MCF 10A (cell line): ENCODE measurements at regions of chr2 and their contacts with region 1.

Region 1: DNA sequence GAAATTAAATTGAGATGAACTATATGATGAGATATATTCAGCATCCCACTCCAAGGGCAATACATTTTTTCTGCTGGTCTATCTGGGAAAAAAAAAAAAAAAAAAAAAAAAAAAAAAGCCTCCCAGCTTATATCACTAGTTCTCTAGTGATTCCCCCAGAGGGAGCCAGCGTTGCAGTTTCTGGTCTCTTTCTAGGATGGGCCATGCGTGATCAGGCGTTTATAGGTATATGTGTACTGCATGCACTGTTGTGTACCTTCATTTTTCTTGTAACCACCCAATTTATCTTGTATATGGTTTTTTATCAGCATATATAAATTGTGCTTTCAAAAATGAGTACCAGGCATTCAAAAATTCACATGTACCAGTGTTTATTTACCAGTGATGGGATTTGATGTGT is 35.1 kb downstream of the DCDC2C start:
- DNase-seq: peak; percentile 74
- H3K4me3 Mint-ChIP-seq: no peak overlapping the region
- H3K27ac Mint-ChIP-seq: no peak overlapping the region
- H3K4me1 Mint-ChIP-seq: no peaks in the 10 kb centered on the region
- H3K27me3 Mint-ChIP-seq: peaks cover 16% of the 10 kb centered on the region
- CTCF ChIP-seq: peak; percentile 60

Region 2: DNA sequence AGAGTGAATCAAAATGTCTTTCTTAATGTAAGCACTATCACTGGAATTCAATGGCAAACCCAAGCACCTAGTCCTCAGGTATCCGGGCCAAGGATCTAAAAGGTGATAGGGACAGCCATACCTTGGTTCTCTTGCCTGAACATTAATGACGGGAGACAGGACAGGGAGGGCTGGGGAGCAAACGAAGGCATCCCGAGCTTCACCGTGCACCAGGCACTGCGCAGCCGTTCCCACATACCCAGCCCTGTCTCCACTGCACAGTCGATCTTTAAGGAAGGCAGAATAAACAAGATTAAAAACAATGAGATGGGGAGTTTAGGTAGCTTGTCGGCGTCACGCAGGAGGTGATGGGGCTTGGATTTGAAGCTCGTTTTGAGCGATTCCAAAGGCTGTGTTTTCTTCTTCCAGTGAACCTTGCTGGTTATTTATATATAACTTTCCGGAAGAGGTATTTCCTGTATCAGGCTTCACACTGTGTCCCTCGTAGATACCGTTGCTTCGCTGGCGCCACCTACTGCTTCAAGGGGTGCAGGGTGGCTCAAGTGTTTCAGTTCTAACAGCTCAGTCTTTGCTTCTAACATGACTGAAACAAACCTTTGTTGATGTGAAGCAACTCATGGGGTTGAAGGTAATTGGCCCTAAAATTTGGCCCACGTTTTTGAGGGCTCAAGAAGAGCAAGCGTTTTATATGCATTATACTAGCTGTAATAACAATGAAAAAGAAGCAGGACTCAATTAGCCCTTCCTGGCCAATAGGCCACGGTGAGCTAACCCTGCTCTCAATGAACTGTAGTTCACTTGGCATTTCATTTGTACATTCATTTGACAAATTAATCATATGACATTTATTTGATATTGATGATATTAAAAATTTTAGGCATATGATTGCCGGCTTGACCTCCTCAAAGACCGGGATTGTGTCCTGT is 42.3 kb after region 1 on chr2:
- CTCF ChIA-PET with region 1: interaction called, 5 read pairs
- POLR2A ChIA-PET with region 1: no interaction called
- intact Hi-C with region 1: loop called (anchors 1 kb)
- DNase-seq: peak; percentile 78
- H3K4me3 Mint-ChIP-seq: no peak overlapping the region
- H3K27ac Mint-ChIP-seq: no peak overlapping the region
- H3K4me1 Mint-ChIP-seq: peaks cover 18% of the 10 kb centered on the region
- H3K27me3 Mint-ChIP-seq: peaks cover 31% of the 10 kb centered on the region
- CTCF ChIP-seq: peak; percentile 42

Region 3: GRCh38 chr2:3805201-3805939 is 66.9 kb after region 1 on chr2:
- CTCF ChIA-PET with region 1: interaction called, 3 read pairs
- POLR2A ChIA-PET with region 1: no interaction called
- intact Hi-C with region 1: loop called (anchors 1 kb)
- DNase-seq: peak; percentile 73
- H3K4me3 Mint-ChIP-seq: no peak overlapping the region
- H3K27ac Mint-ChIP-seq: no peak overlapping the region
- H3K4me1 Mint-ChIP-seq: peaks cover 15% of the 10 kb centered on the region
- H3K27me3 Mint-ChIP-seq: no peaks in the 10 kb centered on the region
- CTCF ChIP-seq: peak; percentile 20

Region 4: DNA sequence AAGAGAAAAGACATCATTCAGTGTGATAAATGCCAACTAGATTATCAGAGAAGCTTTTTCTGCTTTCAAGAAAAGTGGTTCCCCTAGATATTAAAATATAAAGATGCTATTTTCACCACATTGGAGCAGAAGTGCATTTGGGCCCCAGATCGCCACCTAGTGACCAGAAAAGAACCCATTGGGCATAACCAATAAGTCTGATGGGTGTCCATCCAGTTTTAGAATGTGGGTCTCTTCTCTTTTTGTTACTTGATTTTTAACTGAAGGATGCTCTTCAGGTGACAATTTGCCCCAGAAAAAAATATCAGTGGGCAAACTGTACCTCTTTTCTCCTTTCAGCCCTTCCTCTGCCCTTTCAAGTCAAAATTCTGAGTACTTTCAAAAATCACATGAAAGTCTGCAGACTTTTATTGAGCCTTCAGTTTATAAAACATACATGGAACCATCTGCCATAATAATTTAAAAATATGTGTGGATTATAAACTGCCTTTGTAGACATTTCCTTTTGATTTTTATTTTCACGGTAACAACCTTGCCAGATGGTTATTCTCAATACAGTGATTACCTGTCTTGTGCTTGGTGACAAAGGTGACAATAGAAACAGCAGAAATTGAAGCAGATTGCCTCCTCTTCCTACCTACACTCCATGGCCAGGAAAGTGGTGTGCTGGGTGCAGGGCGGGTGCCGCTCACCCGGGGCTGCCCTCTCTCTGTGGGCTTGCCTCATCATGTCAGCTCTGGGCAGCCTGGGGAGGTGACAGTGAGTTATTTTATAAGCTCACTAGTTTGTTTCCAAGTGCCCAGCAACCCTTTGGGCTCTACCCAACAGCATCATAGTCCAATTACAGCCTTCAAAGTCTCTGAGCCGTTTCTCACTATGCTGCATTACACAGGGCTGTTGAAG is 89.5 kb after region 1 on chr2:
- CTCF ChIA-PET with region 1: interaction called, 15 read pairs
- POLR2A ChIA-PET with region 1: interaction called, 3 read pairs
- intact Hi-C with region 1: loop called (anchors 1 kb)
- DNase-seq: peak; percentile 70
- H3K4me3 Mint-ChIP-seq: no peak overlapping the region
- H3K27ac Mint-ChIP-seq: no peak overlapping the region
- H3K4me1 Mint-ChIP-seq: peaks cover 23% of the 10 kb centered on the region
- H3K27me3 Mint-ChIP-seq: no peaks in the 10 kb centered on the region
- CTCF ChIP-seq: peak; percentile 55

Region 5: DNA sequence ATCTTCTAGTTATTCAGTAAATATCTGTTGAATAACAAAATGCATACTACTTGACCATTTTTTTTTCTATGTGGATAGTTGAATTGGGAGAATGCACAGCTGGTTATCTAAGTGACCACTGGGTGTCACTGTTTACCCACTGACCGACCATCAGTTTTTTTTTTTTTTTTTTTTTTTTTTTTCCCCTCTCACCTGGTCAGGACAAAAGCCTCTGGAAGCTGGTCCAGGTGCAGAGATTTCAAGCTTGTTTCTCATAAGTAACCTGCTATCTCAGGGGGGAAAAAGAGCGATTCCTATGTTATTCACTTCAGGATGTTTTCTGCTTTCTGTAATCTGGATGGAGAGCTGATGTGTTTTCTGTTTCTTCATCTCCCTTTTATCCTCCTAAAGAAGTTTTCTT is 220.9 kb after region 1 on chr2:
- CTCF ChIA-PET with region 1: no interaction called
- POLR2A ChIA-PET with region 1: no interaction called
- intact Hi-C with region 1: loop called (anchors 5 kb)
- DNase-seq: peak; percentile 46
- H3K4me3 Mint-ChIP-seq: no peak overlapping the region
- H3K27ac Mint-ChIP-seq: no peak overlapping the region
- H3K4me1 Mint-ChIP-seq: peaks cover 10% of the 10 kb centered on the region
- H3K27me3 Mint-ChIP-seq: no peaks in the 10 kb centered on the region
- CTCF ChIP-seq: peak; percentile 55